ENCODE measurements at regions of chr13 and their contacts with region 1.

Region 1: DNA sequence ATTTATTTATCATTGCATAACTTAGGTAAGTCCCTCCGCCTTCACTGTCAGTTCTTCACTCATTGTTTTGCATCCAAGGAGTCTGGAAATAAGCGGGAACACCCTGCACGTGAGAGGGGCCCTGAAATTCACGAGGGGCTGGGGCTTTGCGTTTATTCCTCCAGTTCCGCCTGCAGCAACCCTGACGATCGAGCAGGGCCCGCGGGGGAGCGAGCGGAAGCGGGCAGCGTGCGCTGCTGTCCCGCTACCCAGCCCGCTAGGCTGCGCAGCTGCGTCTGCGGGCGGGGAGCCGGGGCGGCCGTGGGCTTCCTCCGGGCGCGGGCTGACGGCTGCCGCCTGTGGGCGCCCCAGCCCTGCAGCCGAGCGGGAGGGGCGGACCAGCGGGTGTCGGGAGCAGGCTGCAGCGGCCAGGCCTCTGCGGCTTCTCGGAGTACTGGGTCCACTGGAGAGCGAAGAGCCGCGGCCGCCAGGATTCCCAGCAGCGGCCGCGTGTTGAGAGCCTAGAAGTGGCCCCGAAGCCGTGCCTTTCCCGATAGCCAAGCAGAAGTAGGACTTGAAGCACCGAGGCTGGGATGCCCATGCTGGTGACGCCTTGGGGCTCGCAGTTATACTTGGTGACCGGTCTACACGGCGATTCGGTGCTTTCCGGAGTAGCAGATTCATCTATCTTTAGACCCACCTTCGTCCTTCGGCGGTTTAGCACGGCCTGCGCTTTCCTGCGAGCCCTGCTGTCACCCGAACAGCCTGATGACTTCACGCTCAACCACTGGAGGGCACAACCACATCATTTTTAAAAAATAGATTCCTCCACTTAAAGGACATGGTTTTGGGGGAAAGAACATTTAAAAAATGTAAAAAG is 32.9 kb upstream of the SACS start:
- DNase-seq: peak; percentile 80
- H3K4me3 ChIP-seq: peak overlapping the region; percentile 43
- H3K27ac ChIP-seq: no peak overlapping the region
- H3K4me1 ChIP-seq: no peaks in the 10 kb centered on the region
- H3K27me3 ChIP-seq: peaks cover 2% of the 10 kb centered on the region
- CTCF ChIP-seq: peak; percentile 68

Region 2: DNA sequence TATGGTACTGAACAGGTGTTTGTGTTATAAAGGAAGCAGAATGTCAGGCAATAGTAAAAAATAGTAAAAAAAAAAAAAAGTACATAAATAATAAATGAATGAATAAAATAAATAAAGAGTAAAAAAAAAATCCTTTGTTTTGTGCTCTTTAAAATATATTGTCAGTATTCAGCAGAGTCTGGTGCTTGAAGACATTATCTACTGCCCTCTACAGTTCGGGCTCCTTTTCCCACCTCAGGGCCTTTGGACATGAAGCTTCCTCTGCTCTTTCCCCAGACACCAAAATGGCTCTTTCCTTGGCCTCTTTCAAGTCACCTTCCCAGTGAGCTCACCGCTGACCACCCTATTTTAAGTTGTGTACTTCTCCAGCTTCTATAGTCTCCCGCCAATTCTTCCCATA is 241.3 kb after region 1 on chr13:
- CTCF ChIA-PET with region 1: no interaction called
- POLR2A ChIA-PET with region 1: no interaction called
- intact Hi-C with region 1: loop called (anchors 10 kb)
- DNase-seq: no peak
- H3K4me3 ChIP-seq: no peak overlapping the region
- H3K27ac ChIP-seq: no peak overlapping the region
- H3K4me1 ChIP-seq: no peaks in the 10 kb centered on the region
- H3K27me3 ChIP-seq: no peaks in the 10 kb centered on the region
- CTCF ChIP-seq: 0 out of 2 replicates have a peak, but pooled peaks have one; percentile 24

Region 3: GRCh38 chr13:23871616-23872220 is 405.3 kb after region 1 on chr13:
- CTCF ChIA-PET with region 1: no interaction called
- POLR2A ChIA-PET with region 1: no interaction called
- intact Hi-C with region 1: loop called (anchors 2 kb)
- DNase-seq: peak; percentile 55
- H3K4me3 ChIP-seq: no peak overlapping the region
- H3K27ac ChIP-seq: no peak overlapping the region
- H3K4me1 ChIP-seq: no peaks in the 10 kb centered on the region
- H3K27me3 ChIP-seq: no peaks in the 10 kb centered on the region
- CTCF ChIP-seq: peak; percentile 61

Region 4: GRCh38 chr13:23888658-23889614 is 422.6 kb after region 1 on chr13 and contains the start of gene MIPEP:
- CTCF ChIA-PET with region 1: no interaction called
- POLR2A ChIA-PET with region 1: no interaction called
- intact Hi-C with region 1: loop called (anchors 5 kb)
- DNase-seq: peak; percentile 98
- H3K4me3 ChIP-seq: peak within 1 kb of the TSS; percentile 88
- H3K27ac ChIP-seq: peak within 1 kb of the TSS; percentile 74
- H3K4me1 ChIP-seq: peaks cover 4% of the 10 kb centered on the region
- H3K27me3 ChIP-seq: no peaks in the 10 kb centered on the region
- CTCF ChIP-seq: peak; percentile 88
- total RNA-seq, gene MIPEP: 22.7 and 25.4 TPM in 2 replicates

Region 5: DNA sequence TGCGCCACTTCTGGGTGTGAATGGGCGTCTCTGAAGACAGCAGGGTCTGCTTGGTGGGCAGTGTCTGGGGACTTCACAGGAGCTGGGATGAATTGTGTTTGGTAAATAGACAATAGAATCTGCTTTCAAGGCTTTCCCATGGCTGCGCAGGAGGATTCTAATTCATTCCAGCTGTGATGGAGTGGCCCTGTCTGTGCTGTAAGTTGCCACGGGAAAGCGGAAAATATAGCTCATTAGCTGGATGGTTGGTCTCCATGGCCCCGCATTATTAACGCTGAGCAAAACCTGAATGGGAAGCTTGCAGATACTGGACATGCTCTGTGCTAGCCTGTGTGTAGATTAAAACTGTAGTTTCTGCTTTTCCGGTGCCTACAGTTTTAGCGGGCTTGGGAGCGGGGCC is 827.4 kb after region 1 on chr13:
- CTCF ChIA-PET with region 1: no interaction called
- POLR2A ChIA-PET with region 1: no interaction called
- intact Hi-C with region 1: no loop called
- DNase-seq: peak; percentile 94
- H3K4me3 ChIP-seq: peak overlapping the region; percentile 34
- H3K27ac ChIP-seq: peak overlapping the region; percentile 87
- H3K4me1 ChIP-seq: peaks cover 34% of the 10 kb centered on the region
- H3K27me3 ChIP-seq: no peaks in the 10 kb centered on the region
- CTCF ChIP-seq: no peak